Activated naive CD4-positive, alpha-beta T cell treated with anti-CD3 and anti-CD28 coated beads for 36 hours (primary cell): ENCODE measurements at regions of chr5 and their contacts with region 1.

Region 1: GRCh38 chr5:108381954-108382783 is at the start of gene FBXL17:
- DNase-seq: peak; percentile 95
- H3K4me3 Mint-ChIP-seq: peak within 1 kb of the TSS; percentile 82
- H3K27ac Mint-ChIP-seq: peak within 1 kb of the TSS; percentile 95
- H3K4me1 Mint-ChIP-seq: peaks cover 36% of the 10 kb centered on the region
- H3K27me3 Mint-ChIP-seq: no peaks in the 10 kb centered on the region
- total RNA-seq, gene FBXL17: 3.5 to 4.3 TPM

Region 2: DNA sequence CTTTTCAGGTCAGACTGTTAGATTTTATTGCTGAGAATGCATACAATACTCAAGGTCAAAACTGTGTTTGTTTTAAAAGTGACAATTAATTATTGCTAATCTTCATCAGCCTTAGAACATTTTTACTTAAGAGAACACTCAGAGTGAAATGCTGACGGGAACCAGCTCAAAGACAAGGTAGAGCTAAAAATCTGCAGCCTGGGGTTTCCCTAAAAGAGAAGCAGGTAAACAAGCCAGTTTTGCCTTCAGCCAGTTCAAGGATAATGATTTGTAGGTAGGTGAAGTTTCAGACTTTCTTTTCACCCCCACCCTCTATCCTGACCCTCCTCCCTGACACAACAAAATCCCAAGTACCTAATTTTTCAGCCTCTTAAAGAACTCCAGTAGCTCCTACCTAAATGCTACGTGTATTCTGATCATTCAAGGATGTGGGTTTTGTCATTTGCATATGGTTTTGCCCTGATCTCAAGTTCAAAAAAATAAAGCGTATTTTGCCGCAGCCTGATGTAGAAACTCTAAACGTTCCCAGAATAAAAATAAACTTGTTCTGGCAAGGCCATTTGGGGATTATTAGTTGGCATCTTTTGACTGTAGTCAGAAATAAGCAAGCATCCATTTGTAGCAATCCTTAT is 1118.7 kb before region 1 on chr5:
- CTCF ChIA-PET with region 1: no interaction called
- intact Hi-C with region 1: loop called (anchors 5 kb)
- DNase-seq: peak; percentile 6
- H3K4me3 Mint-ChIP-seq: no peak overlapping the region
- H3K27ac Mint-ChIP-seq: peak overlapping the region; percentile 7
- H3K4me1 Mint-ChIP-seq: peaks cover 6% of the 10 kb centered on the region
- H3K27me3 Mint-ChIP-seq: peaks cover 6% of the 10 kb centered on the region

Region 3: DNA sequence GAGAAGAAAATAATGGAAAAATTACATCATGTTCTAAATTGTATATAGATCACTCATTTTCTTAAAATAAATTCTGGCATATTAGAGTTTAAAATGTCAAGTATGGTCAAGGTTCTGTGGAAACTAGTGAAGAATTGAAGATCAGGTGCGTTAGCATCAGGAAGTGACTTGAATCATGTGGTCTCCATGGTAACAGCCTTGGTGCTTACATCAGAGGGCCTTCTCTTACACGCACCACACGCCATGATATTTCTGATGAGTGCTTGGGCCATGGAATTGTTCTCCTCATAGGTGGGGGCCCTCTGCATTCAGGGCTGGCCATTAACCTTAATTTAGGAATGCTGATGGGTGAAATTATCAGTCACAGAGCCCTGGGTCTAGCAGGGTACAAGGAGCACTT is 423.3 kb before region 1 on chr5:
- CTCF ChIA-PET with region 1: no interaction called
- intact Hi-C with region 1: loop called (anchors 5 kb)
- DNase-seq: peak; percentile 7
- H3K4me3 Mint-ChIP-seq: no peak overlapping the region
- H3K27ac Mint-ChIP-seq: peak overlapping the region; percentile 80
- H3K4me1 Mint-ChIP-seq: peaks cover 38% of the 10 kb centered on the region
- H3K27me3 Mint-ChIP-seq: no peaks in the 10 kb centered on the region

Region 4: DNA sequence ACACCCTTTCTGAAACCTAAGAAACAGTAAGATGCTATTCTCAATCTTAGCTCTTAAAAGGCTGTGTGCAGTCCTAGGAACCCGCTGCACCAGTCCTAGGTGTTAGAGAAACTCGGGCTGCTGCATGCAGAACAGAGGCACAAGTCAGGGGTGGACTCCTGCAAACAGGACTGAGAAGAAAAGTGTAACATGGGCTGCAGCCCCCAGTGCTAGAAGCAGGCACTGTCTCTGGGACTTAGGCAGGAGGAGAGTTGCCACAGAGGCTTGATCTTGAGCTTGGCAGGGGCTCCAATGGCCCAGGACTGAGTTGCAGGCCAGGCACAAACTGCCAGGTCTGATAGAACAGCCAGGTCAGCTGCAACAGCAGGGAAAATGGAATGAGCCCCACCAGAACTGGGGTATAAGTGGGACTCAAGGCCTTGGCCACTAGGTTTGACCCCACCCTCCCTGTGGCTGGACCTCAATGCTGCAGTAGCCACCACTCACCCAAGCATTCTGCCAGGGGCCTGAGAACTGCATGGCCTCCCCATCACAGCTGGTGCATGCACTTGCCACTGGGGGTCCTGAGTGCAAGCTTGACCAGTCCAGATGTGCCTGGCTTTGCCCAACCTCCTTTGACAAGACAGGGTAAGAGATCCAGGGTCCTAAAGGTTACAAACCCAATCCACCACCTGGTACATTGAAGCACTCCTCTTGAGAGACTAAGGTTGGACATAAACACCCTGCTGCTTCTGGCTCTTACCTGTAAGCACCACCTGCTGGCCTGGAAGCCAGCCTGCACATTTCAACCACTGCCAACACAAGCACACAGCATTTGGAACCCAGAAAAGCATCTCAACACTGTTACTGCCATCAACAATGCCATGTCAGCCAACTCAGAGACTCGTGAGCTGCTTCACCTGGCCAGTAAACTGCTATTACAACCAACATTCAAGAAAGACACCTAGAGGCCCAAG is 103.6 kb before region 1 on chr5:
- CTCF ChIA-PET with region 1: no interaction called
- intact Hi-C with region 1: loop called (anchors 1 kb)
- DNase-seq: peak; percentile 12
- H3K4me3 Mint-ChIP-seq: no peak overlapping the region
- H3K27ac Mint-ChIP-seq: no peak overlapping the region
- H3K4me1 Mint-ChIP-seq: peaks cover 30% of the 10 kb centered on the region
- H3K27me3 Mint-ChIP-seq: no peaks in the 10 kb centered on the region

Region 5: GRCh38 chr5:108548684-108549596 is 166.8 kb after region 1 on chr5:
- CTCF ChIA-PET with region 1: no interaction called
- intact Hi-C with region 1: no loop called
- DNase-seq: no peak
- H3K4me3 Mint-ChIP-seq: no peak overlapping the region
- H3K27ac Mint-ChIP-seq: no peak overlapping the region
- H3K4me1 Mint-ChIP-seq: no peaks in the 10 kb centered on the region
- H3K27me3 Mint-ChIP-seq: peaks cover 5% of the 10 kb centered on the region

Region 6: GRCh38 chr5:108727651-108728565 is 345.7 kb after region 1 on chr5:
- CTCF ChIA-PET with region 1: interaction called, 3 read pairs
- intact Hi-C with region 1: loop called (anchors 1 kb)
- DNase-seq: peak; percentile 53
- H3K4me3 Mint-ChIP-seq: peak overlapping the region; percentile 61
- H3K27ac Mint-ChIP-seq: peak overlapping the region; percentile 6
- H3K4me1 Mint-ChIP-seq: peaks cover 21% of the 10 kb centered on the region
- H3K27me3 Mint-ChIP-seq: peaks cover 42% of the 10 kb centered on the region